Endothelial cell of umbilical vein (primary cell): ENCODE measurements at regions of chr3 and their contacts with region 1.

Region 1: DNA sequence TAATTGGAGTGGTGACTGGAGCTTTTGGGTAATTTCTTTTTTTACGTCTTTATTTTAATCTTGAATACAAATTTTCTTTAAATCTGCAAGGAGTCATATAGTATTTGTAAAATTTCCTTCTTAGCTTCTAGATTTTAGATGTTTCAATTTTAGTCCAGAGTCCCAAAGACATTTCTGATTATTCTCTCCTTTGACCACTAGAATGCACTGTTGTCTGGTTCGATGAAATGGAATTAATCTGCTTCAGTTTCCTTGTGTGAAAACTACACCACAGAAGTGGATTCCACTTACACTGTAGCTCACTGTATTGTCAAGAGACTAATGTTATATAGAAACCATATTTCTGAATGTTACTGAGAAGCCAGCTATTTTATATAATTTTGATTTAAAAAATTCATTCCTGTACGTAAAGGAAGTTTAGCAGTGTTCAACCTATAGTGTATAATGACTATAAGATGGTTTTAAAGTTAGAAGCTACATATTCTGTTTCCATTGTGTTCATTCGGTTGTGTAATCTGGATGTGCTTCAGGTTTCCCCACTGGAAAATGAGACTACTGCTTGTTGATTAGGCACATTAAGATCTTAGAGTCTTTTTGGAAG is 6.1 kb downstream of the GRAMD1C start:
- DNase-seq: peak; percentile 63
- H3K4me3 ChIP-seq: no peak overlapping the region
- H3K27ac ChIP-seq: no peak overlapping the region
- H3K4me1 ChIP-seq: no peaks in the 10 kb centered on the region
- H3K27me3 ChIP-seq: no peaks in the 10 kb centered on the region
- CTCF ChIP-seq: peak; percentile 34 to 46
- POLR2A ChIP-seq: no peak

Region 2: DNA sequence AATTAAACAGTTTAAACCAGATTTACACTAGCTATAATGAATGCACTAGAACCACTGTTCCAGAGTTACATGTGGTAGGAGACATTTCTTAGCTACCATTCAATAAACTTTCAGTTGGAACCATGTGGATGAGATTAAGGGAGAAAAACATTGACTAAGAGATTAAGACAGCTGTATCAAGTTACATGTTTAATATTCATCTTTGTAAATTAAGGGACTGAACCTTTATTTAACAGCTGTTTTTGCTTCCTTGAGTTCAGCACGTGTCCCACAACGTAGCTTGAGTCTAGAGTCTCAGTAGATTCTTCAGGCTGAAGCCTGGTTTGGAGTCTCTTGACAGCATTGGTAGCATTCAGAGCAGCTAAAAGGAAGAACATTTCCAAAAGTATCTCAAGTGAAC is 376.2 kb before region 1 on chr3:
- CTCF ChIA-PET with region 1: no interaction called
- POLR2A ChIA-PET with region 1: no interaction called
- dilution Hi-C with region 1: no loop called
- intact Hi-C with region 1: no loop called
- DNase-seq: no peak
- H3K4me3 ChIP-seq: no peak overlapping the region
- H3K27ac ChIP-seq: no peak overlapping the region
- H3K4me1 ChIP-seq: no peaks in the 10 kb centered on the region
- H3K27me3 ChIP-seq: no peaks in the 10 kb centered on the region
- CTCF ChIP-seq: no peak
- POLR2A ChIP-seq: no peak

Region 3: DNA sequence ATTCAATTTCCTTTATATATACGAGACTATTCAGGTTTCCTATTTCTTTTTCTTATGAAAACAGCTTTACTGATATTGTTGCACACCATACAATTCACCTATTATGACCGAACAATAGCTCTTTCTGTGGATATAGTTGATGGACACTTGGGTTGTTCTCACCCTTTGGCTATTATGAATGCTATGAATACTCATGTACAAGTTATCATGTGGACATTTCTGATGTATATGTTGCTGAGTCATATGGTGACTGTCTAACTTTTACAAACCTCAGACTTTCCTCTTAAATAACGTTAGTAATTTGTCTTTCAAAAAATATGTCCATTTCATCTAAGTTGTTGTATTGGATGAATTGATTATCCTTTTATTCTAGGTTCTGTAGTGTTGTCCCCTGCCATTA is 132.6 kb before region 1 on chr3:
- CTCF ChIA-PET with region 1: no interaction called
- POLR2A ChIA-PET with region 1: no interaction called
- dilution Hi-C with region 1: no loop called
- intact Hi-C with region 1: no loop called
- DNase-seq: peak; percentile 12
- H3K4me3 ChIP-seq: no peak overlapping the region
- H3K27ac ChIP-seq: no peak overlapping the region
- H3K4me1 ChIP-seq: no peaks in the 10 kb centered on the region
- H3K27me3 ChIP-seq: peaks cover 0 to 4% of the 10 kb centered on the region in 2 experiments
- CTCF ChIP-seq: no peak
- POLR2A ChIP-seq: no peak

Region 4: GRCh38 chr3:113912552-113913236 is 68.0 kb after region 1 on chr3:
- CTCF ChIA-PET with region 1: interaction called, 17 read pairs
- POLR2A ChIA-PET with region 1: no interaction called
- dilution Hi-C with region 1: no loop called
- intact Hi-C with region 1: loop called (anchors 1 kb)
- DNase-seq: peak; percentile 66
- H3K4me3 ChIP-seq: no peak overlapping the region
- H3K27ac ChIP-seq: no peak overlapping the region
- H3K4me1 ChIP-seq: no peaks in the 10 kb centered on the region
- H3K27me3 ChIP-seq: no peaks in the 10 kb centered on the region
- CTCF ChIP-seq: peak; percentile 39 to 43
- POLR2A ChIP-seq: no peak

Region 5: DNA sequence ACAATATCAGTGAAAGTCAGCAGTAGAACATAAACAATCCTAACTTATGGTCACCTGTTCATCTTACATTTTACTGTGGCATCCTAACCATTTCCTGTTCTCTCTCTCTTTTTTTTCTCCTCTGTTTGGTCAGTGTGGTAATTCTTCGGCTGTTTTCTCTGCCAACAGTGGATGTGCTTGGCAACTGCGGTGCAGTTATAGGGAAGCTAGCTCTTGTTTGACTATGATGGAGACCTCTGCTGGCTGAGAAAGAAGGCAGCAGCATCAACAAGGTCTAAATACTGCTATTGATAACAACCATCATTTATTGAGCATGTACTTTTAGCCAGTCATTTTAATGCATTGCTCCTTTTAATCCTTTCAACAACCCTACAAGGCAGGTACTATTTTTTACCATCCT is 334.9 kb after region 1 on chr3:
- CTCF ChIA-PET with region 1: interaction called, 23 read pairs
- POLR2A ChIA-PET with region 1: no interaction called
- dilution Hi-C with region 1: no loop called
- intact Hi-C with region 1: no loop called
- DNase-seq: peak; percentile 19
- H3K4me3 ChIP-seq: no peak overlapping the region
- H3K27ac ChIP-seq: no peak overlapping the region
- H3K4me1 ChIP-seq: no peaks in the 10 kb centered on the region
- H3K27me3 ChIP-seq: peaks cover 12 to 24% of the 10 kb centered on the region in 2 experiments
- CTCF ChIP-seq: peak; percentile 14 to 30
- POLR2A ChIP-seq: no peak

Region 6: GRCh38 chr3:114290911-114291901 is 446.5 kb after region 1 on chr3:
- CTCF ChIA-PET with region 1: interaction called, 14 read pairs
- POLR2A ChIA-PET with region 1: no interaction called
- dilution Hi-C with region 1: no loop called
- intact Hi-C with region 1: loop called (anchors 10 kb)
- DNase-seq: peak; percentile 50
- H3K4me3 ChIP-seq: no peak overlapping the region
- H3K27ac ChIP-seq: no peak overlapping the region
- H3K4me1 ChIP-seq: no peaks in the 10 kb centered on the region
- H3K27me3 ChIP-seq: peaks cover 2% of the 10 kb centered on the region in 2 experiments
- CTCF ChIP-seq: peak; percentile 76 to 80
- POLR2A ChIP-seq: no peak

Region 7: DNA sequence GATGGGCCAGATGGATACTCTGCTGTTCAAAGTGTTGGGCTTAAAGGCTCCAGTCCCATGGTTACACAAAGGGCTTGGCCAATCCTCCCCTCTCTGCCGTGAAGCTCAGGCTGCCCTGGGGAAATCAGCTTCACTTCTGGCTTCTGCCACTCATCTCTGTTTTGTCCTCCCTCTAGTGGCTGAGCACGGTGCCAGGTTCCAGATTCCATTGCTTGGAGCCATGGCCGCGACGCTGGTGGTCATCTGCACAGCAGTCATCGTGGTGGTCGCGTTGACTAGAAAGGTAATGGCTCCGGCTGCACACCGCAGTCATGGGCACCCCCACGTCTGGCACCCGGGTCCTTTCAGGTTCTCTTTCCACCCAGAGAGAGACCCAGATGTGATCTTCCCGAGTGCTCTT is 454.7 kb after region 1 on chr3:
- CTCF ChIA-PET with region 1: interaction called, 26 read pairs
- POLR2A ChIA-PET with region 1: no interaction called
- dilution Hi-C with region 1: no loop called
- intact Hi-C with region 1: loop called (anchors 10 kb)
- DNase-seq: peak; percentile 39
- H3K4me3 ChIP-seq: no peak overlapping the region
- H3K27ac ChIP-seq: no peak overlapping the region
- H3K4me1 ChIP-seq: no peaks in the 10 kb centered on the region
- H3K27me3 ChIP-seq: peaks cover 8% of the 10 kb centered on the region in 2 experiments
- CTCF ChIP-seq: peak; percentile 42 to 67
- POLR2A ChIP-seq: no peak

Region 8: GRCh38 chr3:114447545-114447944 is 602.8 kb after region 1 on chr3:
- CTCF ChIA-PET with region 1: no interaction called
- POLR2A ChIA-PET with region 1: no interaction called
- dilution Hi-C with region 1: no loop called
- intact Hi-C with region 1: no loop called
- DNase-seq: no peak
- H3K4me3 ChIP-seq: no peak overlapping the region
- H3K27ac ChIP-seq: no peak overlapping the region
- H3K4me1 ChIP-seq: peaks cover 12% of the 10 kb centered on the region
- H3K27me3 ChIP-seq: no peaks in the 10 kb centered on the region
- CTCF ChIP-seq: no peak
- POLR2A ChIP-seq: no peak